Naive thymus-derived CD4-positive, alpha-beta T cell (primary cell): ENCODE measurements at regions of chr17 and their contacts with region 1.

Region 1: DNA sequence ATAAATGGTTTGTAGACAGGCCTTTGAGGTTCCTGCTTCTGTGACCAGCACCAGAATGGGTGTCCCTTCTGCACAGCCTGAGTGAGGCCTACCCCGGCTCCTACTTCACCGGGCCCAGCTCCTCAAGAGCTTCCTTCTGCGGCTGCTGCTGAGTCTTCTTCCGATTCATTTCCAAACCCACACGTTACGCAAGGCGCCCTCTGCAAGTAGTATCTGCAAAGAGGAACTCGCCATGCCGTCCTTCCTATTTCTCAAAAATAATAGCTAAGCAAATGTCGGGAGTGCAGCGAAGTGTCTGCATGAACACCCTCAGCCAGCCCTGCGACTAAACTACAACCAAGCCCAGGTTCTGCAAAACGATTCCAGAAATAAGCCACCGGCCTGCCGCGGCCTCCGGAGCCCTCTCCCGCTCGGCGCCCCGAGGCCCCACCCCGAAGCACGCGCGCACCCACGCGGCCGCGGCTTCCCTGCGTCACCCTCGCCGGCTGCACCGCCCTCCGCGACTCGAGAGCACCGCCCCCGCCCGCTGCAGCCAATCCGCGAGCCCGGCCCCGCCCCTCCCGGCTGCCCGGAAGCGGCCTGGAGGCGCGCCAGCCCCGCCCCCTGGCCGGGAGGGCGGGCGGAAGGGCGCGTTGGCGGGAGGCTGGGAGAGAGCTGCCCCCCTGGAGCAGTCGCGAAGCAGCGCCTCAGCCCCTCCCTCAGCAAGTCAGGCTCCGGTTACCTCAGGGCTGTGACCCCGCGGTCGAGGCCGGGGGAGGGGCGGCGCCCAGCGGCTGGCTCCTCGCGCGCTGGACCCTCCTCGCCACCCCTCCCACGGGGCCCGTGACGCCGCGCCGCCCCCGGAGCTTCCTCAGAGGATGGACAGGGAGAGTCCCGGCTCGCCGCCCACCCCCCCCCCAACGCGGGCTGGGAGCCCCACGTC is 8.3 kb downstream of the MNT start:
- DNase-seq: peak; percentile 94 to 100 (median 98)
- ATAC-seq: peak; percentile 78
- H3K4me3 ChIP-seq: peak overlapping the region; percentile 89
- H3K4me3 Mint-ChIP-seq: peak overlapping the region; percentile 88 to 97 (median 94)
- H3K27ac ChIP-seq: peak overlapping the region; percentile 100
- H3K27ac Mint-ChIP-seq: peak overlapping the region; percentile 90 to 98 (median 96)
- H3K4me1 ChIP-seq: peaks cover 15 to 52% of the 10 kb centered on the region in 2 donors
- H3K4me1 Mint-ChIP-seq: peaks cover 38 to 70% (median 56%) of the 10 kb centered on the region in 7 donors
- H3K27me3 ChIP-seq: no peaks in the 10 kb centered on the region
- H3K27me3 Mint-ChIP-seq: no peaks in the 10 kb centered on the region

Region 2: DNA sequence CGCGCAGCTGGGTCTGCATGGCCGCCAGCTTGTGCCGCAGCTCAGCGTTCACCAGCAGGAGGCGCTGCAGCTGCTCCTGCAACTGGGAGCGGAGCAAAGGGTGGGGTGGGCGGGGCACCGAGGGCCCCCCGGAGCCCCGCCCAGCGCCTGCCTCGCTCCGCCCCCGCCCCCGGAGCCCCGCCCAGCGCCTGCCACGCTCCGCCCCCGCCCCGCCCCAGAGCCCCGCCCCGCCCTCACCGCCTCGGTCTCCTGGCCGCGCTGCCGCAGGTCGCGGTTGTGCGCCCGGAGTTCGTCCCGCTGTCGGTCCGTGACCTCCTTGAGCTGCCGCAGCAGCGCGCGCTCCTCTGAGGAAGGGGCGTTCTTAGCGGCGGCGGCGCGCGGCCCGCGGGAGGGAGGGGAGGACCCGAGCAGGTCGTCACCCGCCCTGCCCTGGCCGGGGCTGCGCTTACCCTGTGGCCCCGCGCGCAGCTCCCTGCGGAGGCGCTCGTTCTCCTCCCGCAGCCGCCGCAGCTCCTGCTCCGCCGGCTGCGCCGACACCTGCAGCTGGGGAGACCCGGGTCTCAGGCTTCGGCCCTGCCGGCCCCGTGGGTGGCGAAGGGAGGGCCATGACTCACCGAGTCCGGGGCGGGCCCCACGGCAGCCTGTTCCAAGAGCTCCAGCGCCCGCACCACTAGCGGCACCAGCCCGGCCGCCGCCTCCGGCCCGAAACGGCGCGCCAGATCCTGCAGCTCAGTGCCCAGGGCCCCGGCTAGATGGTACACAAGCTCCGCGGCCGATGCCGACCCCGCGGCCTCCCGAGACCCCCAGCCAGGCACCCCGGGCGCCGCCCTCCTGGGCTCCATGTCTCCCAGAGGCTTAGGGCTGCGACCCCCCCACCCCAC is 743.3 kb before region 1 on chr17:
- CTCF ChIA-PET with region 1: no interaction called
- POLR2A ChIA-PET with region 1: no interaction called
- intact Hi-C with region 1: loop called in 1 of 2 experiments (anchors 1 kb)
- DNase-seq: peak; percentile 88 to 97 (median 93)
- ATAC-seq: peak; percentile 90
- H3K4me3 ChIP-seq: peak overlapping the region; percentile 64
- H3K4me3 Mint-ChIP-seq: peak overlapping the region; percentile 65 to 81 (median 74)
- H3K27ac ChIP-seq: peak overlapping the region; percentile 69
- H3K27ac Mint-ChIP-seq: peak overlapping the region in 5 of 9 donors; percentile 38 to 58 (median 55)
- H3K4me1 ChIP-seq: peaks cover 15 to 21% of the 10 kb centered on the region in 2 donors
- H3K4me1 Mint-ChIP-seq: peaks cover 0 to 38% (median 10%) of the 10 kb centered on the region in 7 donors
- H3K27me3 ChIP-seq: no peaks in the 10 kb centered on the region
- H3K27me3 Mint-ChIP-seq: no peaks in the 10 kb centered on the region

Region 3: DNA sequence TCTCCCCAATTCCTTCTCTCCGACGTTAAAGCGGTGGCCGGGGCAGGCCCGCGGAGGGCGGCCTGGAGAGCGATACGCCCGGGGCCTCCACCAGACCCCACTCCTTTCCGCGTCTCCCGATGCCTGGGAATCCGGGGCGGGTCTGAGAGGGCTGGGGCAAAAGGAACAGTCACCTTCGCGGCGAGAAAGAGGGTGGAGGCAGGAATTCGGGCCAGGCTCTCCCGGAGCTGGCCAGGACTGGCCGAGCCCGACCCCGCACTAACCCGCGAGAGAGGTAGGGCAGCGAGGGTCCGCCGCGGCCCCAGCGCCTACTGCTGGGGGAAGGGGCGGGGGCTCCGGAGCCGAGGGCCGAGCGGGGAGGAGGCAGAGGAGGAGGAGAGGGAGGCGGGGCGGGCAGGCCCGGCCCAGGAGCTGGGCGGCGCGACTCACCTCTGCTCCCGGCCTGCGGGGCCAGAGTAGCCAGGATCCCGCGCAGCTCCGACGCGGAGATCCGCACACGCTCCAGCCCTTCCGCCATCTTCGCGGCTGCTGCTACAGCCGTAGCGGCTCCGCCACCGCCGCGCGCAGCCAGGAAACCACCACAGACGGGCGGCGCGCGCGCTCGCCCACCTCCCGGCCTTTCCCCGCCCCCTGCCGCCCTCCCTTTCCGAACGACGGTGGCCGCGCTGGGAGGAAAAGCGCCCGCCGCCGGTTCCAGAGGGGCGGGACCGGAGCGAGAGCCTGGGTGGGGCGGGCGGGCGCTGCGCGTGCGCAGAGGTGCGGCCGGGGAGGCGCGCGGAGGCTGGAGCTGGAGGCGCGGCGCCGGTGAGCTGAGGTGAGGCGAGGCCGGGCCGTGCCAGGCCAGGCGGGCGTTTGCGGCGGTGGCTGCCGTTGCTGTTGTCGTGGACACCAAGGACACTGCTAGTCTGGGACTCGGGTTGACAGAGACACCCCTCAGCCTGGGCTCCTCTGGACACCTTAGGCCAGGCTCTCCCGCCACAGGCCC is 89.0 kb before region 1 on chr17 and contains the starts of genes SMG6 and SRR:
- CTCF ChIA-PET with region 1: no interaction called
- POLR2A ChIA-PET with region 1: interaction called, 3 read pairs
- intact Hi-C with region 1: loop called (anchors 1 to 2 kb)
- DNase-seq: peak; percentile 87 to 95 (median 93)
- ATAC-seq: peak; percentile 97
- H3K4me3 ChIP-seq: peak within 1 kb of the TSS; percentile 87
- H3K4me3 Mint-ChIP-seq: peak within 1 kb of the TSS; percentile 90 to 98 (median 92)
- H3K27ac ChIP-seq: peak within 1 kb of the TSS; percentile 98
- H3K27ac Mint-ChIP-seq: peak within 1 kb of the TSS; percentile 76 to 95 (median 84)
- H3K4me1 ChIP-seq: peaks cover 9 to 13% of the 10 kb centered on the region in 2 donors
- H3K4me1 Mint-ChIP-seq: peaks cover 25 to 61% (median 47%) of the 10 kb centered on the region in 7 donors
- H3K27me3 ChIP-seq: no peaks in the 10 kb centered on the region
- H3K27me3 Mint-ChIP-seq: no peaks in the 10 kb centered on the region
- total RNA-seq, gene SMG6: 45.6 to 65.3 (median 55.8) TPM
- total RNA-seq, gene SRR: 3.1 to 16.0 (median 8.3) TPM

Region 4: DNA sequence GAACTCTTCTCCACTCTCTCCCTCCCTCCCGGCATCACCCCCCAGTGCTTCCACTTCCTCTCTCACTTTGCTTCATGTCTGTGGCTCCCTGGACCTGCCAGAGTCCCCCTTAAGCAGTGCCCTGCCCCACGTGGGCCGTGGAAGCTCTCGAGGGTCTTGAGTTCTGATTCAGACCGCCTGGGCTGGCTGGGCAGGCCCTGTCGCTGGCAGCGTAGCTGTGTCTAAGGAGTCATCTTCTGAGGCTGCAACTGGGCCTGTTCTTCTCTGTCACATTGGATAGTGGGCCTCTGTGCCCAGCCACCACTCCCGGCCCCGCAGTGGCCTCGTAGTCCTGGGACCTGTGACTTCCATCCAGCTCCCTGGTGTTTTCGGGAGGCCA is 22.3 kb before region 1 on chr17:
- CTCF ChIA-PET with region 1: no interaction called
- POLR2A ChIA-PET with region 1: no interaction called
- intact Hi-C with region 1: no loop called
- DNase-seq: peak in 1 of 9 donors; percentile 5
- ATAC-seq: no peak
- H3K4me3 ChIP-seq: no peak overlapping the region
- H3K4me3 Mint-ChIP-seq: no peak overlapping the region
- H3K27ac ChIP-seq: no peak overlapping the region
- H3K27ac Mint-ChIP-seq: no peak overlapping the region
- H3K4me1 ChIP-seq: no peaks in the 10 kb centered on the region
- H3K4me1 Mint-ChIP-seq: no peaks in the 10 kb centered on the region
- H3K27me3 ChIP-seq: no peaks in the 10 kb centered on the region
- H3K27me3 Mint-ChIP-seq: no peaks in the 10 kb centered on the region

Region 5: GRCh38 chr17:2380226-2380922 is 12.1 kb before region 1 on chr17:
- CTCF ChIA-PET with region 1: interaction called, 14 read pairs
- POLR2A ChIA-PET with region 1: interaction called, 17 read pairs
- intact Hi-C with region 1: loop called (anchors 1 kb)
- DNase-seq: no peak
- ATAC-seq: no peak
- H3K4me3 ChIP-seq: no peak overlapping the region
- H3K4me3 Mint-ChIP-seq: no peak overlapping the region
- H3K27ac ChIP-seq: no peak overlapping the region
- H3K27ac Mint-ChIP-seq: peak overlapping the region in 2 of 9 donors; percentile 17 to 43
- H3K4me1 ChIP-seq: peaks cover 0 to 5% of the 10 kb centered on the region in 2 donors
- H3K4me1 Mint-ChIP-seq: peaks cover 0 to 5% (median 0%) of the 10 kb centered on the region in 7 donors
- H3K27me3 ChIP-seq: no peaks in the 10 kb centered on the region
- H3K27me3 Mint-ChIP-seq: no peaks in the 10 kb centered on the region

Region 6: GRCh38 chr17:2416010-2416734 is 23.7 kb after region 1 on chr17:
- CTCF ChIA-PET with region 1: interaction called, 18 read pairs
- POLR2A ChIA-PET with region 1: interaction called, 4 read pairs
- intact Hi-C with region 1: no loop called
- DNase-seq: peak; percentile 70 to 87 (median 78)
- ATAC-seq: peak; percentile 90
- H3K4me3 ChIP-seq: no peak overlapping the region
- H3K4me3 Mint-ChIP-seq: no peak overlapping the region
- H3K27ac ChIP-seq: no peak overlapping the region
- H3K27ac Mint-ChIP-seq: peak overlapping the region in 7 of 9 donors; percentile 31 to 80 (median 58)
- H3K4me1 ChIP-seq: no peaks in the 10 kb centered on the region
- H3K4me1 Mint-ChIP-seq: peaks cover 0 to 4% (median 0%) of the 10 kb centered on the region in 7 donors
- H3K27me3 ChIP-seq: no peaks in the 10 kb centered on the region
- H3K27me3 Mint-ChIP-seq: no peaks in the 10 kb centered on the region